ENCODE measurements at regions of chr12 and their contacts with region 1.

Region 1: DNA sequence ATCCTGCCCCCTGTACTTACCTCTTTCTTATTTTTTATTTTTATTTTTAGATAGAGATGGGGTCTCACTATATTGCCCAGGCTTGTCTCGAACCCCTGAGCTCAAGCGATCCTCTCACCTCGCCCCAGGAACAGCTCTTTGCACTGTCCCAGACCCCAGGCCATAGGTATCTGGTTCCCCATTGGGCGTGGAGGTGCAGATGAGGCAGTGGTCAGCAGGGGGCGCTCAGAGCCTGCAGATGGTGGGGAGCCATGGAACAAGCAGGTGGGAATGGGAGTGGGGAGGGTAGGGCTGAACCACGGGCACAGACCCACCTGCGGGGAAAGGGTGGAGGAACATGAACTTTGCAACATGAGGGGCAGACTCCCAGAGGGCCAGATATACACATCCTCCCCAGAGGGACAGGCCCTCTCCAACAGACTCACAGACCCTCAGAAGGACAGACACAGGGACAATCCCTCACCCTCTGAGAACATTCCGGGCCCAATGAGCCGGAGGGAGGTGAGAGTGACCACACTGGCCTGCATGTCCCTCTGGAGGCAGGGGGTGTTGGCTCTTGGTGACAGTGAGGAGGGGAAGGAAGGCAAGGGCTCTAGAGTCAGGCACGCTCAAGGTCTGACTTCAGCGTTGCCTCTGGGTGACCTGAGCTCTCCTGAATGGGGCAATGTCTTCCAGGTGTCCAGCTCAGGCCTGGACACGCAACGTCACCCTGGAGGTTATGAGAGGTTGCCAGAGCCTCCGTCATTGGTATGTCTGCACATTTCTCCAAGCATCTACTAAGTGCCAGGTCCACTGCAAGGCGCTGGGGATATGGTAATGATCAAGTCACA is 34.9 kb downstream of the KRT80 start:
- DNase-seq: no peak
- H3K4me3 ChIP-seq: no peak overlapping the region
- H3K27ac ChIP-seq: no peak overlapping the region
- H3K4me1 ChIP-seq: peaks cover 28% of the 10 kb centered on the region
- H3K27me3 ChIP-seq: no peaks in the 10 kb centered on the region
- CTCF ChIP-seq: peak; percentile 90 to 95 (median 95)
- POLR2A ChIP-seq: no peak

Region 2: DNA sequence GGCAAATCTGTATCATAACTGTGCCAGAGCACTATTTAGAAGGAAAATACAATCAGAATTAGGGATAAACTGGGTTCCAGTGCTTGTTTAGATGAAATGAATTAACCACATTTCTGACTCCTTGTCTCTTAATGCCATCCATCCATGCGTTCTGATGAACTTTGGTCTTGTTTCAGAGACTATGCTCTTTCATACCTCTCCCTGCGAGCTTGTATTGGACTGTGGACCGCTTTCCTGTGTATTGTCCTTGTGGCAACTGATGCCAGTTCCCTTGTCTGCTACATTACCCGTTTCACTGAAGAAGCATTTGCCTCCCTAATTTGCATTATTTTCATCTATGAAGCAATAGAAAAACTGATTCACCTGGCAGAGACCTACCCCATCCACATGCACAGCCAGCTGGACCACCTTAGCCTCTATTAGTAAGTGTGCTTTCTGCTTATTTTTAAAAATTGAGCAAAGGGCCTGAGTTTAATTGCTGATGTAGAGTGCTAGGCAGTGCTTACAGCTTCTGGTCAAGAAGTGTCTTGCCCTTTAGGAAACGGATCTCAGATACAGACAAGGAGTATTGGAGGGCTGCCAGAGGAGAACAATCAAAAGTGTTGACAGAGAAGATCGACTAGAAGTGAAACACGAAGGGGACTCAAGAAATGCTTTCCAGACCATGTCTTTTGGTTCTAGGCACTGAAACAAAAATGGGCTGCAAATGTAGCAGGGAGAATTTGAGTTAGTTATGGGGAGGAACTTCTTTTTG is 685.7 kb before region 1 on chr12:
- intact Hi-C with region 1: no loop called
- DNase-seq: no peak
- H3K4me3 ChIP-seq: no peak overlapping the region
- H3K27ac ChIP-seq: no peak overlapping the region
- H3K4me1 ChIP-seq: no peaks in the 10 kb centered on the region
- H3K27me3 ChIP-seq: no peaks in the 10 kb centered on the region
- CTCF ChIP-seq: no peak
- POLR2A ChIP-seq: no peak

Region 3: DNA sequence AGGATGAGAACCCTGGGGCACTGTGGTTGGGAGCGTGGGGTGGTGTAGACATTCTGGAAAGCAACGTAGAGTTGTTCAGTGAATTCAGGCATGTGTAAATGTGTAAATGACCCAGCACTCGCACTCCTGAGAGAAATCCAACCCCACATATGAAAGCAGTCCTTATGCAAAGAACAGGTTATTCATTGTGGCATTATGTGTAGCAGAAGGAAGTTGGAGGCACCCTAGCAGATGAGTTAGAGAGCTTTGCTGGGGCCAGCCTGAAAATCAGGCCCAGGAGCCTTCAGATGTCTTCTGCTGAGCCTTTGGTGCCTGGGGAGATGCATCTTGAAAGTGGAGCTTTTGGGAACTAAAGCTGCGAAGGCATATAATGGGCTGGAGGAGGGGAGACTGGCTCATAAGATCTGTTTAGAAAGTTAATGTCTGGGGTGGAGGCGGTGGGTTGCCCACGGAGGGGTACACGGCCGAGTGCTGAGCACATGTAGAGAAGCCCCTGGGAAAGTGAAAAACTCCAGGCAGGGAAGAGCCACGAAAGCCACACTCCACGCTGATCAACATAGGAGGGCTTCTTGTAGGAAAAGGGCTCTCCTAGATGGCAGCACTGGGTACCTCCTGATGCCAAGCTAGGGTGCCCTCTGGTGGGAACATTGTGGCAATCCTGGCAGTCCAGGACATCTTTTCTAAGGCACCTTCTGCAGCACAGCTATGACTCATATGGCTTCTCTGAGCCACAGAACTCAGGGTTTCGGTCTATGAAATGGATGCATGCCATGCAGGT is 170.3 kb after region 1 on chr12:
- intact Hi-C with region 1: loop called (anchors 5 kb)
- DNase-seq: no peak
- H3K4me3 ChIP-seq: no peak overlapping the region
- H3K27ac ChIP-seq: no peak overlapping the region
- H3K4me1 ChIP-seq: peaks cover 7% of the 10 kb centered on the region
- H3K27me3 ChIP-seq: no peaks in the 10 kb centered on the region
- CTCF ChIP-seq: peak; percentile 42 to 91 (median 59)
- POLR2A ChIP-seq: no peak

Region 4: GRCh38 chr12:52493172-52493571 is 336.2 kb after region 1 on chr12 and contains the start of gene KRT6A:
- intact Hi-C with region 1: no loop called
- DNase-seq: peak in 1 of 2 donors; percentile 74
- H3K4me3 ChIP-seq: peak within 1 kb of the TSS in 1 of 2 donors; percentile 38
- H3K27ac ChIP-seq: peak within 1 kb of the TSS; percentile 61
- H3K4me1 ChIP-seq: peaks cover 23% of the 10 kb centered on the region
- H3K27me3 ChIP-seq: no peaks in the 10 kb centered on the region
- CTCF ChIP-seq: no peak
- POLR2A ChIP-seq: no peak
- total RNA-seq, gene KRT6A: 7,258 TPM

Region 5: DNA sequence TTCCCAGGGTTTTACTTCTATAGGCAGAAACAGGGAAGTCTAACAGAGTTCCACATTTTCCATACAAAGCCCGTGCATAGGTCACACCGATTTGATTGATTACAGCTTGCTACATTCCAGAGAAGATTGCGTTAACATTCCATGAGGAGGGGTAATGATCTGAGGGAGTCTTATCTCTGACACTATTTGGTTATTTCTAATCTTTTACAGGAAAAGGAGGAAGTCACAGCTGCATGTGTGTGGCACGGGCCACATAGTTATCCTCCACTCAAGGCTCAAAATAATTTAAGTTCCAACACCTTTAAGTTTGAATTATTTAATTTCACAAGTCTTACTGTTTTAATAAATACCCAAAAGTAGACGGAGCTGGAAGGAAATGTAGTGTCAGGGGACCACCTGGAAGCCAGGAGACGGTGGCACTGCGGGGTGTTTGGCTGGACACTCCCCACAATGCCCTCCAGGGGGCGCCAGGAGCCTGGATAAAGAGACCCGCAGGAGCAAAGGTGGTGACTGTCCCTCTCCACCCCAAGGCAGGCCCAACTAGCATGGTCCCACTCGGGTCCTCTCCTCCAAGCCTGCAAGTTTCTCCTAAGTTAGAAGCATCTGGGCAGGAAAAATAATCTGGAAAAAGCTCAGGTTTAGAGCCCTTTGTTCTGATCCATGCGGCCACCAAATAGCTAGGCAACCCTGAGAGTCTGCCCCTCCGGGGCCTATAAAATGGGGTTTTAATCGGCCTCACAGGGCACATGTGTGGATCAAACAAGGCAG is 727.8 kb after region 1 on chr12:
- intact Hi-C with region 1: loop called (anchors 5 kb)
- DNase-seq: no peak
- H3K4me3 ChIP-seq: no peak overlapping the region
- H3K27ac ChIP-seq: no peak overlapping the region
- H3K4me1 ChIP-seq: peaks cover 6% of the 10 kb centered on the region
- H3K27me3 ChIP-seq: no peaks in the 10 kb centered on the region
- CTCF ChIP-seq: peak; percentile 89 to 94 (median 94)
- POLR2A ChIP-seq: no peak